Kidney (tissue), 22 donors: ENCODE measurements at regions of chr2 and their contacts with region 1.

Region 1: DNA sequence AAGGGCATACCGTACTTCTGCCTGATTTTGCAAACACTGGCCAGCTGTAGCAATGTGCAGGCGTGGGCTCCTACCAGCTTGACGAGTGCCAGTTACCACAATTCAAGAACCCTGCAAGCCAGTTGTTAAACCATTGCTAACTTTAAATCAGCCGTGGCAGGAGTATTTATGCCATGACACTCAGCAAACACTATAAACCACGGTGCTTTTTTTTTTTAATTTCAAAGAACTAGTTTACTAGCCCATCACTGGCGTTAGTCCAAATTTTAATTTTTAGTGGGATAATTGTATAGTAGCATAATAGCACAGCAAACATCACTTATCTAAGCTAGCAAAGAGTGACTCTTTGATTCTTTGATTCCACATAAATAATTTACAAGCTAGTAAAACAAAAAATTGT is 111.1 kb downstream of the COL4A4 start:
- DNase-seq: no peak
- H3K4me3 ChIP-seq: no peak overlapping the region
- H3K27ac ChIP-seq: no peak overlapping the region
- H3K4me1 ChIP-seq: no peaks in the 10 kb centered on the region
- H3K27me3 ChIP-seq: no peaks in the 10 kb centered on the region
- CTCF ChIP-seq: no peak

Region 2: DNA sequence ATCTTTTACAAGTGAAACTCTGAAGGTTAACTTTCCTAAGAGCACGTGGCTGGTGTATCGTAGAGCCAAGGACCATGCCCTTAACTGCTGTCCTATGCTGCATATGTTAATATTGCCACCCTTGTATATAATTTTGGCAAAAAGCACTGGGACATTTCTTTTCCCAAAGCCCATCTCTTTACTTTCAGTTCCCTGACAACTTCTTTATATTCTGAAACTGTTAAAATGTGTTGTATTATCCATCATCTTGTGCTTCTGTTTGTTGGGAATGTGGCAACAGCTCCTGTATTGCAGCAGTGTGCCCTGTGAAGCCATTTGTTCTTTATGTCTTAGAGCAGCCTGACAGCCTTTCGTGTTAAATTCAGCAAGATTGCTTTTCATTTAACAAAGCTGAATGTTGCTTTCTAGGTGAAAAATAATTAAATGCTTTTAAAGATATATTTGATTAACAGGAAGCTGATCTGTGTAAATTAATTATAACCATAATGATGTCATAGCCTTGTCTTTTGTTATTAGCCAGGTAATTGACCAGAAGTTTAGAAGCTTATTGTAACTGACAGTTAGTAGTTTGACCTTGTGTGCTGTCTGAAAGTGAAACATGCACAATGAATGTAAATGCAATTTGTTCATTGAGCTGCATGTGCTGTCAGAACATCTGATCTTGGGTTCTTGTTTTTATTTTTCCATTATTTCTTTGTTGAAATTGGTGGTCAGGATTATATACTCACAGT is 207.3 kb before region 1 on chr2:
- intact Hi-C with region 1: no loop called
- DNase-seq: no peak
- H3K4me3 ChIP-seq: no peak overlapping the region
- H3K27ac ChIP-seq: no peak overlapping the region
- H3K4me1 ChIP-seq: no peaks in the 10 kb centered on the region
- H3K27me3 ChIP-seq: no peaks in the 10 kb centered on the region
- CTCF ChIP-seq: no peak

Region 3: GRCh38 chr2:227125506-227125905 is 72.6 kb after region 1 on chr2:
- intact Hi-C with region 1: no loop called
- DNase-seq: no peak
- H3K4me3 ChIP-seq: no peak overlapping the region
- H3K27ac ChIP-seq: no peak overlapping the region
- H3K4me1 ChIP-seq: no peaks in the 10 kb centered on the region
- H3K27me3 ChIP-seq: peaks cover 3% of the 10 kb centered on the region
- CTCF ChIP-seq: no peak

Region 4: GRCh38 chr2:227267410-227268148 is 214.7 kb after region 1 on chr2:
- intact Hi-C with region 1: loop called (anchors 5 kb)
- DNase-seq: no peak
- H3K4me3 ChIP-seq: no peak overlapping the region
- H3K27ac ChIP-seq: no peak overlapping the region
- H3K4me1 ChIP-seq: no peaks in the 10 kb centered on the region
- H3K27me3 ChIP-seq: no peaks in the 10 kb centered on the region
- CTCF ChIP-seq: no peak

Region 5: GRCh38 chr2:227627769-227628168 is 574.9 kb after region 1 on chr2:
- intact Hi-C with region 1: no loop called
- DNase-seq: no peak
- H3K4me3 ChIP-seq: no peak overlapping the region
- H3K27ac ChIP-seq: no peak overlapping the region
- H3K4me1 ChIP-seq: no peaks in the 10 kb centered on the region
- H3K27me3 ChIP-seq: no peaks in the 10 kb centered on the region
- CTCF ChIP-seq: no peak